Activated CD8-positive, alpha-beta memory T cell treated with anti-CD3 and anti-CD28 coated beads, Interleukin-2, amount 10 ng/mL, durations not matched to agents 7 days and 5 days (primary cell): ENCODE measurements at regions of chr11 and their contacts with region 1.

Region 1: GRCh38 chr11:130069684-130070108 is at the start of gene APLP2:
- DNase-seq: peak; percentile 98
- ATAC-seq: peak; percentile 95
- H3K4me3 Mint-ChIP-seq: peak within 1 kb of the TSS; percentile 90
- H3K27ac Mint-ChIP-seq: peak within 1 kb of the TSS; percentile 91
- H3K4me1 Mint-ChIP-seq: peaks cover 18% of the 10 kb centered on the region
- H3K27me3 Mint-ChIP-seq: peaks cover 27% of the 10 kb centered on the region
- total RNA-seq, gene APLP2: 21.9 to 33.5 TPM

Region 2: GRCh38 chr11:130002846-130003716 is 66.6 kb before region 1 on chr11:
- CTCF ChIA-PET with region 1: interaction called, 12 read pairs
- DNase-seq: peak; percentile 94
- ATAC-seq: peak; percentile 79
- H3K4me3 Mint-ChIP-seq: peak overlapping the region; percentile 92
- H3K27ac Mint-ChIP-seq: peak overlapping the region; percentile 100
- H3K4me1 Mint-ChIP-seq: peaks cover 29% of the 10 kb centered on the region
- H3K27me3 Mint-ChIP-seq: no peaks in the 10 kb centered on the region